HCT116 (cell line): ENCODE measurements at regions of chr1 and their contacts with region 1.

Region 1: DNA sequence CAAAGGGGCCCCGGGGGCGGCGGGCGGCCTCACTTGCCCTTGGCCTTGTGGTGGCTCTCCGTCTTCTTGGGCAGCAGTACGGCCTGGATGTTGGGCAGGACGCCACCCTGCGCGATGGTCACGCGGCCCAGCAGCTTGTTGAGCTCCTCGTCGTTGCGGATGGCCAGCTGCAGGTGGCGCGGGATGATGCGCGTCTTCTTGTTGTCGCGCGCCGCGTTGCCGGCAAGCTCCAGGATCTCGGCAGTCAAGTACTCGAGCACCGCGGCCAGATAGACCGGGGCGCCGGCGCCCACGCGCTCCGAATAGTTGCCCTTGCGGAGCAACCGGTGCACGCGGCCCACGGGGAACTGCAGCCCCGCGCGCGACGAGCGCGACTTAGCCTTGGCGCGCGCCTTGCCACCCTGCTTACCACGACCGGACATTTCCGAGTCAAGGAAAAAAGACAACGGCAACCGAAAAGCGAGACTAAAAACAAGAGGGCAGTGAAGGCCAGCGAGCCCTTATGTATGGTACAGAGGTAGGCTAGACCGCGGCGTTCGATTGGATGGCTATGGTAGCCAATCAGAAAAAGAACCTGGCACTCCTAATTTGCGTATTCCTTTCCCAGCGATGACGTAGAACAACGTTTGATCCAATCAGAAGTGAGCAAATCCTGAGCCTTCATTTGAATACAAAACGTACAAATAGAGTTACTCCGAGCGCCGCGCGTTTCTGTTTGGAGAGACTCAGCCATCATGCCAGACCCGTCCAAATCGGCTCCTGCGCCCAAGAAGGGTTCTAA is 29.6 kb upstream of the RNF187 start:
- DNase-seq: peak; percentile 99
- ATAC-seq: peak; percentile 82
- H3K4me3 ChIP-seq: peak overlapping the region; percentile 90 to 94
- H3K27ac ChIP-seq: peak overlapping the region; percentile 98
- H3K4me1 ChIP-seq: peaks cover 7 to 33% of the 10 kb centered on the region in 2 experiments; a peak in 3 of 4 replicates
- H3K27me3 ChIP-seq: no peaks in the 10 kb centered on the region
- CTCF ChIP-seq: peak in 2 of 3 experiments; percentile 15 to 24; a peak in 2 of 6 replicates
- POLR2A ChIP-seq: peak; percentile 98
- RAD21 ChIP-seq: peak; percentile 38; the same call in 1 of the 2 replicates

Region 2: GRCh38 chr1:227844320-227845146 is 613.1 kb before region 1 on chr1:
- CTCF ChIA-PET with region 1: no interaction called
- POLR2A ChIA-PET with region 1: no interaction called
- RAD21 ChIA-PET with region 1: no interaction called
- intact Hi-C with region 1: no loop called
- DNase-seq: no peak
- ATAC-seq: peak; percentile 32
- H3K4me3 ChIP-seq: no peak overlapping the region
- H3K27ac ChIP-seq: no peak overlapping the region
- H3K4me1 ChIP-seq: no peaks in the 10 kb centered on the region
- H3K27me3 ChIP-seq: no peaks in the 10 kb centered on the region
- CTCF ChIP-seq: no peak
- POLR2A ChIP-seq: no peak
- RAD21 ChIP-seq: no peak

Region 3: GRCh38 chr1:227999056-227999930 is 458.3 kb before region 1 on chr1:
- CTCF ChIA-PET with region 1: no interaction called
- POLR2A ChIA-PET with region 1: no interaction called
- RAD21 ChIA-PET with region 1: no interaction called
- intact Hi-C with region 1: loop called (anchors 10 kb)
- DNase-seq: peak; percentile 71
- ATAC-seq: peak; percentile 94
- H3K4me3 ChIP-seq: no peak overlapping the region
- H3K27ac ChIP-seq: no peak overlapping the region
- H3K4me1 ChIP-seq: no peaks in the 10 kb centered on the region
- H3K27me3 ChIP-seq: no peaks in the 10 kb centered on the region
- CTCF ChIP-seq: peak; percentile 92 to 97 (median 96)
- POLR2A ChIP-seq: no peak
- RAD21 ChIP-seq: peak; percentile 97

Region 4: GRCh38 chr1:228212966-228213844 is 244.4 kb before region 1 on chr1:
- CTCF ChIA-PET with region 1: no interaction called
- POLR2A ChIA-PET with region 1: no interaction called
- RAD21 ChIA-PET with region 1: no interaction called
- intact Hi-C with region 1: loop called (anchors 5 kb)
- DNase-seq: peak; percentile 65
- ATAC-seq: peak; percentile 87
- H3K4me3 ChIP-seq: peak overlapping the region; percentile 48 to 57
- H3K27ac ChIP-seq: peak overlapping the region; percentile 54; the same call in 1 of the 2 replicates
- H3K4me1 ChIP-seq: peaks cover 20 to 35% of the 10 kb centered on the region in 2 experiments
- H3K27me3 ChIP-seq: no peaks in the 10 kb centered on the region
- CTCF ChIP-seq: peak in 2 of 3 experiments; percentile 45 to 58; a peak in 5 of 6 replicates
- POLR2A ChIP-seq: no peak
- RAD21 ChIP-seq: no peak; the same call in 1 of the 2 replicates

Region 5: GRCh38 chr1:228340686-228341449 is 116.7 kb before region 1 on chr1:
- CTCF ChIA-PET with region 1: no interaction called
- POLR2A ChIA-PET with region 1: no interaction called
- RAD21 ChIA-PET with region 1: no interaction called
- intact Hi-C with region 1: loop called (anchors 5 kb)
- DNase-seq: no peak
- ATAC-seq: peak; percentile 80
- H3K4me3 ChIP-seq: no peak overlapping the region
- H3K27ac ChIP-seq: no peak overlapping the region
- H3K4me1 ChIP-seq: peaks cover 0 to 10% of the 10 kb centered on the region in 2 experiments; a peak in 1 of 4 replicates
- H3K27me3 ChIP-seq: no peaks in the 10 kb centered on the region
- CTCF ChIP-seq: peak; percentile 27 to 50 (median 45); a peak in 4 of 6 replicates
- POLR2A ChIP-seq: no peak
- RAD21 ChIP-seq: peak; percentile 72

Region 6: GRCh38 chr1:228411618-228412410 is 45.8 kb before region 1 on chr1:
- CTCF ChIA-PET with region 1: no interaction called
- POLR2A ChIA-PET with region 1: interaction called, 10 read pairs
- RAD21 ChIA-PET with region 1: no interaction called
- intact Hi-C with region 1: loop called (anchors 2 kb)
- DNase-seq: no peak
- ATAC-seq: no peak
- H3K4me3 ChIP-seq: no peak overlapping the region
- H3K27ac ChIP-seq: no peak overlapping the region
- H3K4me1 ChIP-seq: peaks cover 5 to 12% of the 10 kb centered on the region in 2 experiments
- H3K27me3 ChIP-seq: no peaks in the 10 kb centered on the region
- CTCF ChIP-seq: no peak
- POLR2A ChIP-seq: no peak
- RAD21 ChIP-seq: no peak

Region 7: GRCh38 chr1:228544021-228544850 is 86.7 kb after region 1 on chr1:
- CTCF ChIA-PET with region 1: no interaction called
- POLR2A ChIA-PET with region 1: no interaction called
- RAD21 ChIA-PET with region 1: no interaction called
- intact Hi-C with region 1: no loop called
- DNase-seq: peak; percentile 18
- ATAC-seq: peak; percentile 78
- H3K4me3 ChIP-seq: peak overlapping the region in 1 of 2 experiments; percentile 25; a peak in 1 of 4 replicates
- H3K27ac ChIP-seq: peak overlapping the region; percentile 64; the same call in 1 of the 2 replicates
- H3K4me1 ChIP-seq: peaks cover 13 to 27% of the 10 kb centered on the region in 2 experiments; a peak in 3 of 4 replicates
- H3K27me3 ChIP-seq: no peaks in the 10 kb centered on the region
- CTCF ChIP-seq: no peak
- POLR2A ChIP-seq: no peak
- RAD21 ChIP-seq: no peak